IMR-90 (cell line): ENCODE measurements at regions of chr6 and their contacts with region 1.

Region 1: GRCh38 chr6:165987483-165988301 is 180.0 kb downstream of the TBXT start:
- DNase-seq: peak; percentile 98
- ATAC-seq: peak; percentile 84
- H3K4me3 ChIP-seq: peak overlapping the region; percentile 58
- H3K27ac ChIP-seq: peak overlapping the region; percentile 54
- H3K4me1 ChIP-seq: peaks cover 10% of the 10 kb centered on the region
- H3K27me3 ChIP-seq: no peaks in the 10 kb centered on the region
- CTCF ChIP-seq: peak; percentile 18; the same call in 1 of the 2 replicates
- POLR2A ChIP-seq: peak; percentile 56
- RAD21 ChIP-seq: peak; percentile 31

Region 2: DNA sequence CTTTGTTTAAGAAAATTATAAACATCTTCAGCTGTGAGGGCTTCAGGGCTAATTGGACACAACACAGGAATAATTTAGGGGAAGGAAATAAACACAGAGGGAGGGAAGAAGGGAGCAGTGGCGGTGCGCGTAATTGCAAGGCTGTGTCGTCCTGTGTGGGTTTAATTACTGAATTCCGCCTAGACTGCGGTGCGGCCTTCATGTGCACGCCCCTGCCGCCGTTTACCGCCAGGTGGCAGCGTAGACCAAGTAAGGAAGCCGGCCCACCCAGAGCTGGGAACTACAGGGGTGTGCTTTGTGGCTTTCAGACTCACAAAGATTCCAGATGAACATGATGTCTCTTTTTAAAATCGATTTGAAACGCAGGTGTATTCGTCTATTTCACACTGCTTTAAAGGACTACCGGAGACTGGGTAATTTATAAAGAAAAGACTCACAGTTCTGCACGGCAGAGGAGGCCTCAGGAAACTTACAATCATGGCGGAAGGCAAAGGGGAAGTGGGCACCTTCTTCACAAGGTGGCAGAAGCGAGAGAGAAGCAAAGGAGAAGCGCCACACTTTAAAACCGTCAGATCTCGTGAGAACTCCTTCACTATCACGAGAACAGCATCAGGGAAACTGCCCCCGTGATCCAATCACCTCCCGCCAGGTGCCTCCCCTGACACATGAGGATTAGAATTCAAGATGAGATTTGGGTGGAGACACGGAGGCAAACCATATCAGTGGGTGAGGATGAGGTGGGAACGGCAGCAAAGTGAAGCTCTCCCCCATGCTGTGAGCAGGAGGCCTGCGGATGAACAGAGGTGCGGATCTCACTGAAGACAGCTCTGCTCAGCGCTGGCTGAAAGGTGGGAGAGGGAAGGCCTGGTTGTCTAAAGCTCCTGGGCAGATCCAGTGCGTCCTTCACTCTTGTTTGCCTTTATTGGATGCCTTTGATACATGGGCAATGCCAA is 102.6 kb before region 1 on chr6:
- CTCF ChIA-PET with region 1: no interaction called
- POLR2A ChIA-PET with region 1: no interaction called
- dilution Hi-C with region 1: no loop called
- in situ Hi-C with region 1: no loop called
- intact Hi-C with region 1: loop called (anchors 1 kb)
- DNase-seq: peak; percentile 68
- ATAC-seq: peak; percentile 96
- H3K4me3 ChIP-seq: no peak overlapping the region
- H3K27ac ChIP-seq: no peak overlapping the region
- H3K4me1 ChIP-seq: peaks cover 7% of the 10 kb centered on the region
- H3K27me3 ChIP-seq: no peaks in the 10 kb centered on the region
- CTCF ChIP-seq: peak; percentile 95
- POLR2A ChIP-seq: peak; percentile 46; the same call in 1 of the 2 replicates
- RAD21 ChIP-seq: peak; percentile 95

Region 3: DNA sequence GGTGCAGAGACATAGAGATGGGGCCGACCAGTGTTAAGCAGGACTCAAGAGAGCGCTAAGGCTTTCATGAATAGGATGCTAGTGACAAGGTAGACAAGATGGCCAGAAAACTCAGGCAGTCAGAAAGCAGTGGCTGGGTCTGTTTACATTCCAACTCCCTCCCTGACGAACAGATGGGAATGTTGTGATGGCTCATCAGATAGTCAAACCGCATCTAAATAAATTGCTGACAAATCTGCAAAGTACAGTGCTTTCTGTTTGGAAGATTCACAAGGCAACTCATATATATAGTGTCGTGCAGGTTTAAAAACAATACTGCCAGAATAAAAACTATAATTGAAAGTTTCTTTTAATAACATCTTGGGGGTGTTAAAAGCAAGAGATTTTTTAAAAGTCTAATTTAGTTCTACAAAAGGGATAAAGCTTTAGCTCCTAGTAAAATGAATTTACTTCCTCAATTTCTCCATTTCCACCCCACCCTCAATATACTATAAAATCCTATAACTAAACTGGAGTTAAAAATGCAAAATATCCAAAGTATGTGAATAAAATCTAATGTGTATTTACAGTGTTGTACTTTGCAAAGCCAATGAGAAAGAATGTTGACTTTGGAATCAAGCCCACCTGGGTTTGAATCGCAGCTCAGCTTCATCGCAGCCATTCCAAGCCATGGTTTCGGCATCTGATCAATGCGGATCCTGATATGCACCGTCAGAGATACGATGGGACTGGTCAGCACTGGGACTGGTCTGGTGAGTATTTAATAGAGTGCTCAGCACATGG is 77.3 kb before region 1 on chr6:
- CTCF ChIA-PET with region 1: no interaction called
- POLR2A ChIA-PET with region 1: no interaction called
- dilution Hi-C with region 1: no loop called
- in situ Hi-C with region 1: no loop called
- intact Hi-C with region 1: loop called (anchors 5 kb)
- DNase-seq: peak; percentile 82
- ATAC-seq: peak; percentile 77
- H3K4me3 ChIP-seq: no peak overlapping the region
- H3K27ac ChIP-seq: no peak overlapping the region; the same call in 1 of the 2 replicates
- H3K4me1 ChIP-seq: peaks cover 9% of the 10 kb centered on the region
- H3K27me3 ChIP-seq: no peaks in the 10 kb centered on the region
- CTCF ChIP-seq: no peak
- POLR2A ChIP-seq: no peak
- RAD21 ChIP-seq: no peak

Region 4: DNA sequence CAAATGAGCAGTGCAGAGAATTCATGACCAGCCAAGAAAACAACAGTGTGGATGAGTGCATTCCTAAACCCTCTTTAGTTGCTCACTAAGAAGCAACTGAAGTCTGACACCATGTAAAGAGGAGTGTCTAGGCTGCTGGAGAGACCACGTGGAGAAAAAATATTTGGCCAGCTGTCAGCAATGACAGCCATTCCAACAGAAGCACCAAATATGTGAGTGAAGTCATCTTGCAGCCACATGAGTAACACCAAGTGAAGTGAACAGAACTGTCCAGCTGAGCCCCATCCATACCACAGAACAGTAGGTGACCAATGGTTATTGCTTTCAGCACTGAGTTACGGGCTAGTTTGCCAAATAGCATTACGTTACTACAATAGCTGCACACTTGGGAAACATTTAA is 90.6 kb after region 1 on chr6:
- CTCF ChIA-PET with region 1: no interaction called
- POLR2A ChIA-PET with region 1: no interaction called
- dilution Hi-C with region 1: no loop called
- in situ Hi-C with region 1: no loop called
- intact Hi-C with region 1: loop called (anchors 5 kb)
- DNase-seq: peak; percentile 96
- ATAC-seq: peak; percentile 98
- H3K4me3 ChIP-seq: no peak overlapping the region
- H3K27ac ChIP-seq: no peak overlapping the region
- H3K4me1 ChIP-seq: peaks cover 1% of the 10 kb centered on the region; the same call in 1 of the 2 replicates
- H3K27me3 ChIP-seq: peaks cover 4% of the 10 kb centered on the region; the same call in 1 of the 2 replicates
- CTCF ChIP-seq: no peak
- POLR2A ChIP-seq: no peak; the same call in 1 of the 2 replicates
- RAD21 ChIP-seq: no peak

Region 5: DNA sequence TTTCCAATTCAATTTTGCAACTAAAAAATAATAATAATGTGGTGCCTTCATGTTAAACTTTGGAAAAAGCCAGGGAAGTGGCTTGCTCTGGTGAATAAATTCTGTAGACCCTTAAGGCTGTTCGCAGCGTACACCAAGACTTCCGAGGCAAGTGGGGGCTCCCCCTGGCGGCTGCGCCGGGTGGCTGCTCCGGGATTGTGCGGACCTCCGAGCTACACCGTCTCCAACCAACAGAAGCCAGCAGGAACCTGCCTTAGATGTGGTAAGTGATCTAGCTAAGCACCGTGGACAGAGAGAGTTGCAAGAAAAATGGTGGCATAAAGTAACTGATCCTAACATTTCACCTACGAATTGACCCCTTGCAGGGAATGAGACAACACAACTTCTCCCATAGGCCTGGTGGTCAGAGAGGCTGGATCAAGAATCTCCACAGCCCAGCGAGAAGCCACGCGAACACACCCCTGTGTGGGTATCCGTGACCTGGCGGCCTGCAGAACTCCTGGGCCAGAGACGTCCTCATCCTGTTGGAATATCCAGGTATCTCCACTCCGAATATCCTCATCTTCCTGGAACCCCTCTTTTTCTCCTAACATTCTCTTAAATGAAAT is 110.3 kb after region 1 on chr6:
- CTCF ChIA-PET with region 1: interaction called, 4 read pairs
- POLR2A ChIA-PET with region 1: no interaction called
- dilution Hi-C with region 1: no loop called
- in situ Hi-C with region 1: loop called (anchors 5 kb)
- intact Hi-C with region 1: loop called (anchors 1 kb)
- DNase-seq: peak; percentile 82
- ATAC-seq: peak; percentile 99
- H3K4me3 ChIP-seq: peak overlapping the region; percentile 35
- H3K27ac ChIP-seq: peak overlapping the region; percentile 21; the same call in 1 of the 2 replicates
- H3K4me1 ChIP-seq: peaks cover 2% of the 10 kb centered on the region; the same call in 1 of the 2 replicates
- H3K27me3 ChIP-seq: peaks cover 5% of the 10 kb centered on the region
- CTCF ChIP-seq: peak; percentile 95
- POLR2A ChIP-seq: no peak
- RAD21 ChIP-seq: peak; percentile 95